Motor neuron (in vitro differentiated cells): ENCODE measurements at regions of chr15 and their contacts with region 1.

Region 1: GRCh38 chr15:77496710-77497103 is 76.0 kb downstream of the HMG20A start:
- ATAC-seq: peak; percentile 56 to 94 (median 73)
- H3K4me3 ChIP-seq: no peak overlapping the region
- H3K27ac ChIP-seq: peak overlapping the region; percentile 4 to 52
- H3K4me1 ChIP-seq: peaks cover 35% of the 10 kb centered on the region in 2 donors

Region 2: GRCh38 chr15:77144492-77145070 is 352.1 kb before region 1 on chr15:
- in situ Hi-C with region 1: loop called in 1 of 9 experiments (anchors 25 kb)
- ATAC-seq: peak in 3 of 8 experiments; percentile 88 to 89 (median 88)
- H3K4me3 ChIP-seq: no peak overlapping the region
- H3K27ac ChIP-seq: no peak overlapping the region
- H3K4me1 ChIP-seq: no peaks in the 10 kb centered on the region

Region 3: GRCh38 chr15:77186594-77187011 is 310.1 kb before region 1 on chr15:
- in situ Hi-C with region 1: loop called in 1 of 9 experiments (anchors 10 kb)
- ATAC-seq: peak in 3 of 8 experiments; percentile 22 to 48 (median 32)
- H3K4me3 ChIP-seq: no peak overlapping the region
- H3K27ac ChIP-seq: no peak overlapping the region
- H3K4me1 ChIP-seq: peaks cover 6 to 8% of the 10 kb centered on the region in 2 donors

Region 4: DNA sequence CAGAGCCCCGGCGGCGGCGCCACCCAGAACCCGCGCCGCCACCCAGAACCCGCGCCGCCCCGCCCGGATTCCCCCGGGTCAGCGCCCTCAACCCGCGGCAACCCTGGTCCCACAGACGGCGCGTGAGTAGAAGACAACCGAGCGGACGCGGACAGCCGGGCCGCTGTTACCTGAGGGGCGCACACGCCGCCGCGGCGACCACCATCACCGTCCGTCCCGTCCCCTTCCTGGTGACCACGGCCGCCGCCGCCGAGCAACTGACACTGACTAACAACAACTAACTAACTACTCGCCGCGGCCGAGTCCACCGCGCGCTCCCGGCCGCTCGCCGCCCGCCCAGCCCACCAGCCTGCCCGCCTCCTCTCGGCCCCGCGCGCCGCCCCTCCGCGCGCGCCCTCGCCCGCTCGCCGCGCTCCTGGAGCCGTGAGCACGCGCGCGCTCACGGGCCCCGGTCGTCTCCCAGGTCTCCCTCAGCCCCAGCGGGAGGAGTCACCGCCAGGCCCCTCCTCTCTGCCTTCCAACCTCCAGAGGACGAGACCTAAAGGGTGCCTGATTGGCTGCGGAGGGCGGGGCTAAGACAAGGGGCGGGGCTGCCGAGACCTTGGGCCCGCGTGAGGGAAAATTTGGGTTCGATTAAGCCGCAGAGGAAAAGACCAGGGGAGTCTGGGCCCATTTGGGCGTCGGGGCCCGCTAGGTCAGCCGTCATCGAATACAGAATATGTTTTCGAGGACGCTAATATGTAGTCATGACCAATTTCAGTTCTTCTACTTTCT is 76.7 kb before region 1 on chr15 and contains the start of gene PEAK1:
- in situ Hi-C with region 1: no loop called
- ATAC-seq: peak; percentile 91 to 97 (median 95)
- H3K4me3 ChIP-seq: peak within 1 kb of the TSS; percentile 87 to 92 (median 91)
- H3K27ac ChIP-seq: peak within 1 kb of the TSS; percentile 91 to 95
- H3K4me1 ChIP-seq: peaks cover 6 to 23% of the 10 kb centered on the region in 2 donors
- total RNA-seq, gene PEAK1: 8.9 to 87.5 (median 12.2) TPM